Dendritic cell treated with granulocyte-macrophage colony-stimulating factor and Interleukin-4, amounts not matched to agents 40 ng/mL and 50 ng/mL, for 4 days (primary cell): ENCODE measurements at regions of chr2 and their contacts with region 1.

Region 1: DNA sequence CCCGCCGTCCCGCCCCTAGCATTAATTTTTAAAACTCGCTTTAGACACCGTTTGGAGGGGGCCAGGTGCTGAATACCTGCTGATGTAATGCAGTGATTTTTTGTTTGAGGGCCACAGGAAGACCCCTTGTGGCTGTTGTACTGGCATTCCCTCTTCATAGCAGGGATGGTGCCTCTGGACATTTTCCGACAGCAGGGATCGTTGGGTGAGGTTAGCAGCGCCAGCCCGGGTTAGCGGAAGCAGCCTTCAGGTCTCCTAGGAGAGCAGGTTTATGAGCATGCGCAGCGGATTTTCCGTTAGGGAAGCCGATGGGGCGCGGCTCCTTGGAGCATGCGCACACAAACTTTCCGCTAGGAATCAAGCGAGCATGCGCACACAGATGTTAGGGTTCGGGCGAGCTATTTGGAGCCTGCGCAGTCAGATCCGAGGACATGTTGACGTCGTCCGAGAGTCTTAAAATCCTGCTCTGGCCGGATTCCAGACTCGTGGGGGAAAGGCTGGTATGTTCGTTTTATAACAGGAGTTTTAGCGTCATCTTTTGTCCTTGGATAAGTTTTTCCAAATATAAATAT is 17.2 kb upstream of the C2orf74 start:
- H3K4me3 Mint-ChIP-seq: peak overlapping the region; percentile 83
- H3K27ac Mint-ChIP-seq: peak overlapping the region; percentile 88
- H3K4me1 Mint-ChIP-seq: no peaks in the 10 kb centered on the region
- H3K27me3 Mint-ChIP-seq: no peaks in the 10 kb centered on the region

Region 2: DNA sequence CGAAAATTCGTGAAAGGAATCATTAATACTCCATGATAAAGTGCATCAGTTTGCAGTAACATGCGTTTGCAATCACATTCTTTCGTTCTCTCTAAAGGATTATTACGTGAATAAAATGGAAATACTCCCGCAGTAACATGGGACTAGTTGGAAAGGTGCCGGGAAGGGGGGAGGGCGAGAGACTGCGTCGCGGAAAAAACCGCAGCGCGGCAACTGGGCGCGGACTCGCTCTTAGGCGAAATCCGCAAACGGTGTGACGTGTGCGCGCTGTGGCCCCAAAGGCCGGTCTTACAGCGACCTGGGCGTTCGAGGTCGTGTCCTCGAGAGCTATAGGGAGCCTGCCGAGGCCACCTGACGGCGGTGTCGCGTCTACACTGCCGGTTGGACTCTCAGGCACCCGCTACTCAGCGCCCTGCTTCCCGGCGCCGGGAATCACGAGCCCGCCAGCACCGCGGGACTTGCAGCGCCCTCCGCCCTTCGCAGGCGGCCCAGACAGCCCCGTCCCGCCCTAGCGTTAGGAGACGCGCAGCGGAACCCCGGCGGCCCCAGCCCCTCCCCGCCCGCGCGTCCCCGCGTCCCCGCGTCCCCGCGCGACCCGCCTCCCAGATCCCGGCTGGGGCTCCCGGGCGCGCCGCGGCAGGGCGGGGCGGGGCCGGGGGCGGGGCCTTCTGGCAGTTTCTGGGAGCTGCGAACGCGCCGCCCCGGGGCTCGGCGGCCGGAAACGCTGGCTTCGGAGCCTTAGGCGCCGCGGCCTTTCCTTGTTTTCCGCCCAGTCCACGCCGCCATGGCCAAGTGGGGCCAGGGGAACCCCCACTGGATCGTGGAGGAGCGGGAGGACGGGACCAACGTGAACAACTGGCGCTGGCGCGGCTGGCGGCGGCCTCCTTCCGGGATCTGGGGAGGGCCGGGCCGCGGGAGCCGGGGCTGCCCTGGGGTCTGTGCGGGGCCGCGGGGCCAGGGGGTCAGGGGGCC is 32.3 kb after region 1 on chr2:
- intact Hi-C with region 1: loop called (anchors 1 kb)
- H3K4me3 Mint-ChIP-seq: peak overlapping the region; percentile 91
- H3K27ac Mint-ChIP-seq: peak overlapping the region; percentile 93
- H3K4me1 Mint-ChIP-seq: peaks cover 88% of the 10 kb centered on the region
- H3K27me3 Mint-ChIP-seq: peaks cover 8% of the 10 kb centered on the region